ENCODE measurements at regions of chr20 and their contacts with region 1.

Region 1: DNA sequence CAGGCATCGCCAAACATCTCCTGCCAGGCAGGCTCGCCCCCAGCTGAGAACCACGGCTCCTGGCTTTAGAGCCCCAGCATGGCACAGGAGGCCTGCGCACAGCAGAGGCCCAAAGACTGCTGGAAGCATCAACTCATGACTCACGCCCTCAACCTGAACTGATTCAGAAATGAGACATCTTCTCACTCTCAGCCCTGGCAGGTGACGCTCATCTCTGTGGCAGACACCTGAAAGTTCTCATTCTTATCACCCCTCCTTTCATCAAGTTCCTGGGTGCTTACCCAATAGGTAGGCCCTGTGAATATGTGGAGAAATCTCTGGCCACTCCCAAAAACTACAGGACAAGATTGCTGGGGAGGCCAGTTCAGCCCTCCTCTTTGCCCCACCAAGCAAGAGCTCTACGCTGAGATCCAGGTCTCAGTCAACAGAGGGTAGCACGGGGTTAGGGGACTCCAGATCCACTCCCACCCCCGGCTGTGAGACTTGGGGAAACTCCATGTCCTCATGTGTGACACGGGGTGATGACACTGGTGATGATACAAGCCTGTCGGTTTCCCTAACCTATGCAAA is 11.3 kb downstream of the NFATC2 start:
- H3K4me3 Mint-ChIP-seq: no peak overlapping the region
- H3K27ac Mint-ChIP-seq: peak overlapping the region; percentile 90
- H3K4me1 Mint-ChIP-seq: peaks cover 88% of the 10 kb centered on the region
- H3K27me3 Mint-ChIP-seq: no peaks in the 10 kb centered on the region

Region 2: DNA sequence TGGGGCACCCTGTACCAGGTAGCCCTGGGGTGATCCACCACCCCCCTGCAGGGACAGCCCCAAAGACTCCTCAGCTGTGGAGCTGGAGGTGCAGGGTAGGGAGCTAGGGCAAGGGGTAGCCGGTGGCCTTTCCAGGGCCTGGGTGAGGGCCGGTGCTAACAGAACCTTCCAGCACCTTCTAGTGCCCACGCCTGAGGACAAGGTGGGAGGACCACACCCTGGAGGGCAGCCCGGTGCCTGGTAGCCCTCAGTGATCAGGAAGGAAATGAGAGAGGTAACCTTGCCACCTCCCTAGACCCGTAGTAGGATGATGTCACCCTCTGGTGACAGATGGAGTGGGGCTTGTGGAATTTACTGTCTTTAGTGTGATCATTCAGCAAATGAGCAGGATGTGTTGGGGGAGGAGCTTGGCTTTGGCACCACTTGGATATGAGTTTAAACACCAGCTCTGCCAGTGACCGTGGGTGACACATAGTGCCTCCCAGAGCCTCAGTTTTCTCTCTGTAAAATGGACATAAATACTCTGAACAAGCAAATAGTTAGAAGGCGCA is 176.4 kb before region 1 on chr20:
- intact Hi-C with region 1: no loop called
- H3K4me3 Mint-ChIP-seq: no peak overlapping the region
- H3K27ac Mint-ChIP-seq: no peak overlapping the region
- H3K4me1 Mint-ChIP-seq: no peaks in the 10 kb centered on the region
- H3K27me3 Mint-ChIP-seq: peaks cover 4% of the 10 kb centered on the region

Region 3: GRCh38 chr20:51500311-51500710 is 30.9 kb before region 1 on chr20:
- intact Hi-C with region 1: loop called (anchors 5 kb)
- H3K4me3 Mint-ChIP-seq: no peak overlapping the region
- H3K27ac Mint-ChIP-seq: no peak overlapping the region
- H3K4me1 Mint-ChIP-seq: peaks cover 82% of the 10 kb centered on the region
- H3K27me3 Mint-ChIP-seq: peaks cover 4% of the 10 kb centered on the region

Region 4: DNA sequence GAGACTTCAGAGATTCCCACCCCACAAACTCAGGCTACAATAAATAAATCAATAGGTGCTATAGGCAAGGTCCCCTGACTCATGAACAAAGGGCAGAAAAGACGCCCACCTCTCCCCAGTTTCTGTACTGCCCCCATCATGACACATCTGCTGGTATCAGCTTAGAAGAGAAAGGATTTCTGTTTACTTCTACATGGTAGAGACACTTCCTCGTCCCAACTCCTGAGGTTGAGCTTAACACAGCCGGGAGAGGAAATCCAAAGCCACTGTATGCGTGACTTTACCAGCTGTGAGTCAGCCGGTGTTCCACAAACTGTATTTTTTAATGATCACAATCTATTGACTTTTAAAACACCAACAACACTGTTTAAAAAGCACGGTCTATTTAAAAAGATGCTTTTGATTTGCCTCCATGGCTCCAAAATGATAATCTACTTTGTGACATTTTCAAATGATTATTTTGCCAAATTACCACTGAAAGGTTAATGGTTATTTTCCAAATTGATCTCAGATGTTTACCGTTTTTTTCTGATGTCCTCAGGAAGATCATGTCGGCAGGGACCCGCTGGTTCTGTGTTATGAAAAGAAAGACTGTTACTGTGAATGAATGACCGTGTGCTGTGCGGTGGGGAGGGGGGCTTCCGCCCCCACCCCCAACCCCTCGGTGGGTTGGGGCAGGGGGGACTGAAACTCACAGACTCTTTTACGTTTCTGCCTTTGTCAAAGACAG is 164.5 kb after region 1 on chr20:
- intact Hi-C with region 1: no loop called
- H3K4me3 Mint-ChIP-seq: no peak overlapping the region
- H3K27ac Mint-ChIP-seq: peak overlapping the region; percentile 12
- H3K4me1 Mint-ChIP-seq: peaks cover 10% of the 10 kb centered on the region
- H3K27me3 Mint-ChIP-seq: peaks cover 6% of the 10 kb centered on the region

Region 5: GRCh38 chr20:51750037-51750763 is 219.0 kb after region 1 on chr20:
- intact Hi-C with region 1: no loop called
- H3K4me3 Mint-ChIP-seq: no peak overlapping the region
- H3K27ac Mint-ChIP-seq: no peak overlapping the region
- H3K4me1 Mint-ChIP-seq: peaks cover 5% of the 10 kb centered on the region
- H3K27me3 Mint-ChIP-seq: no peaks in the 10 kb centered on the region